Left cardiac atrium (tissue), 4 donors: ENCODE measurements at regions of chr2 and their contacts with region 1.

Region 1: GRCh38 chr2:109558076-109558882 is 55.5 kb downstream of the SEPTIN10 start:
- DNase-seq: no peak
- ATAC-seq: peak in 1 of 2 donors; percentile 41

Region 2: DNA sequence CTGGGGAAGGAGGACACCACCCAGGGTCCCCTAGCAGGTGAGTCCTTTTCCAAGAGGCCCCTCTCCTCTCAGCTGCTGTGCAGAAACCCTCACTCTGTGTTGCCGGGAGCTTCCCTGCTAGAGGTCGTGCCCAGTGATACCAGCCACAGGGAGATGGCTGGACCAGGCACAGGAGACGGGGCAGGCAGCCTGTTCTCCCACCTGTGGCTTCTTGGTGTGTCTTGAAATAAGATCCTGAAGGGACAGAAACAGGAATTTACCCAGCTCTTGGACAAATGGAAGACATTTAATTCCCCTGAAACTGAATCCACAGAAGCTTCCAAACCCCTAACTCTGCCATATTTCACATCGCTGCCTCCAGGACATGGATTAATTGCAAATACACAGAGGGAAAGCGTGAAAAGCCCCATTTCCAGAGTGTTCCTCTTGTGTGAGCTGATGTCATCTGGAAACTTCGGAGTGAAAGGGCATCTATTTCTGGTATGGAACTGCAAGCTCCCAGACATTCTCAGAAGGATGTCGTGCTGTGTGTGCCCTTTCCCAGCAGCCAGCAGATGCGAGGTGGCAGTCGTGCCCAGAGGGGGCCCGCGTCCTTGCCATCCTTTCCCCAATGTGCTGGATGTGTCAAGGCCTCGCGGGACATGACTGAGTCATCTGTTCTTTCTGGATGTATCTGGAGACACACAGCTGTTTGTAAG is 122.2 kb before region 1 on chr2:
- intact Hi-C with region 1: no loop called
- DNase-seq: peak; percentile 79
- ATAC-seq: peak; percentile 78 to 79

Region 3: DNA sequence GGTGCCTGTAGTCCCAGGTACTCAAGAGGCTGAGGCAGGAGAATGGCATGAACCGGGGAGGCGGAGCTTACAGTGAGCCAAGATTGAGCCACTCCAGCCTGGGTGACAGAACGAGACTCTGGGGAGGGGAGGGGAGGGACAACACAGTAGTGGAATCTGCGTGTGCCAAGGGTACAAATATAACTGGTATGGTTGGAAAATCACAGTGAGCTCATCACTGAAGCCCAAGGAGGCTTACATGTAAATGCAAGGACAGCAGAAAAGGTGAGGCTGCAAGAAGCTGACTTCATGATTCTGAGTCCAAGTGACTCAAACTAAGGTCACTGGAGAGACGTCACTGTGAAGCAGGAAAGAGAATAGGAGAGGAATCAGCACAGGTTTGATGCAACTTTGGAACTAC is 46.3 kb after region 1 on chr2:
- intact Hi-C with region 1: loop called in 1 of 2 experiments (anchors 10 kb)
- DNase-seq: no peak
- ATAC-seq: peak in 1 of 2 donors; percentile 78